Transverse colon (tissue), 4 donors: ENCODE measurements at regions of chr14 and their contacts with region 1.

Region 1: GRCh38 chr14:56659964-56660551 is 80.5 kb downstream of the TMEM260 start:
- DNase-seq: no peak
- H3K4me3 ChIP-seq: no peak overlapping the region
- H3K27ac ChIP-seq: no peak overlapping the region
- H3K4me1 ChIP-seq: no peaks in the 10 kb centered on the region
- H3K27me3 ChIP-seq: no peaks in the 10 kb centered on the region
- CTCF ChIP-seq: peak; percentile 37 to 61 (median 48)
- EP300 ChIP-seq: no peak
- POLR2A ChIP-seq: no peak

Region 2: DNA sequence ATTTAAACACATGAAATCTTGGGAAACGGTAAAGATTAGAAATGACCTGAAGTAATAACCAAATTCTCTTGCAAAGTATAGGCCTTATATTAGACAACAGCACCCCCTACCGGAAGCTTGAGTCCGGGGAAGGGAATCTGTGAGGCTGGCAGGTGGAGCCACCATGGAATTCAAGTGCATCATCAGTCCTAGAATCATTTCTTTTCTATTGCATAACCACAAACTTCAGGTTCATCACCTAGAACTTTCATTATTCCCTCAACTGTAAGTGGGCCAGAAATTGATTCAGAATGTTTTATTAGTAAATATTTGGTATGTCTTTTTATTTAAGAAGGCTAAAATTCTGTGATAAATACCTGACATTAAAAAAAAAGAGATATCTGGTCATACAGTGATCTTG is 657.3 kb after region 1 on chr14:
- in situ Hi-C with region 1: loop called in 1 of 4 experiments (anchors 25 kb)
- intact Hi-C with region 1: no loop called
- DNase-seq: peak; percentile 72
- H3K4me3 ChIP-seq: no peak overlapping the region
- H3K27ac ChIP-seq: no peak overlapping the region
- H3K4me1 ChIP-seq: no peaks in the 10 kb centered on the region
- H3K27me3 ChIP-seq: peaks cover 12% of the 10 kb centered on the region
- CTCF ChIP-seq: peak; percentile 66 to 87 (median 78)
- EP300 ChIP-seq: no peak
- POLR2A ChIP-seq: no peak